Left cardiac atrium (tissue), 4 donors: ENCODE measurements at regions of chr2 and their contacts with region 1.

Region 1: DNA sequence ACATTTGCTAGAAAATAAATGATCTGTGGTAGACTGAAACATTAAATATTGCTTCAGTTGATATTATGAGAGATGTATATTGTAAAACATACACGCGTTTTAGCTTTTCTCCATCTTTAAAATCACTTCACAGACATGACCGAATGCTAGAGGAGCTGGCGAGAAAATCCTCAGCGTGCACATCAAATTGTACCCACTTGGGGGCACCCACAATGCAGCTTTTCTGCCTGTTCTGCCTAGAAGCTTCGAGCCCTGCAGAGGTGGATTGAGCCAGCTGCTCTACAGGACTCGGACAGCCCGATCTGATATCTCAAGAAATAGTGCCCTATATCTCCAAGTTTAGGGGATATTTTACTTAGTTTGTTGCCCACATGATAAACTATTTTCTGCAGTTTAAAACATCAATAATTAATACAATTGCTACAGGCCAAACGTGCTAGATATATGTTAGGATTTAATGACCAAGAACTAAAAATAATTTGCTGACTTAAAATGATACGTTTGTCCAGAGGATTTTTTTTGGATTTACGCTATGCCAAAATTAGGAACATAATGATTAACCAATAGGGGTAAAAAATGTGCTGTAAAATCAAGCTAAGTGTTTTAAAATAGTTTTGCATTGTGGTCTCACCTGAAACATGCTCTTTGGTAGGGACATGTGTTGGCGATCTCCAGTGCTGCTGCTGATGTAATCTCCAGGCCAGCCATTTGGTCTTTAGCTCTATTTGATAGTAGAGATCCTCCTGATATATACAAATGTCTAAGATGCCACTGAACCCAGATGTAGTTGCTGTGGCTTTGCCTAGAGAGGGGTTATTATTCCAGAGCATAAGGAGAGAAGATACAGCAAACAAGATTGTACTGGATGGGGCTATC is 22.3 kb upstream of the ATP5MC3 start:
- DNase-seq: peak; percentile 43
- ATAC-seq: peak; percentile 69 to 76

Region 2: DNA sequence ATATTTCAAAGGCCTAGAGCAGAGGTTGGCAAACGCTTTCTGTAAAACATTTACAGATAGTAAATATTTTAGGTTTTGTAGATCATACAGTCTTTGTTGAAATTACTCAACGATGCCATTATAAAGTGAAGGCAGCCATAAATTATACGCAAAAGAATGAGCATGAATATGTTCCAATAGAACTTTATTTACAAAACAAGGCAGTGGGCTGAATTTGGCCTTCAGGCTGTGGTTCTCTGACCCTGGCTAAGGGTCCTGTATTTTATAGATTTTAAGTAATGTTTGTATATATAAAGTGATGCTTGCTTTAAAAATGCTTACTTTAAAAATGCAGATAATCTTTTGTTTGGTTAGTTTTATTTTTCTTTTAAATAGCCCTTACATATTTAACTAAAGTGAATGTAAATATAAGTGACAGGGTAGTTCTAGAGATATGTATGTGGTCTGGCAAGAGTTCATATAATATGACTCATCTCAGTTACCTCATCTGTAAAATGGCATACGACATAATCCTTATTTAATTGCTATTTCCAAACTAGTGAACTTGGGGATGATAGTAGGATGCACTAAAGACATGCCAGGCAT is 29.4 kb after region 1 on chr2:
- intact Hi-C with region 1: no loop called
- DNase-seq: no peak
- ATAC-seq: no peak

Region 3: DNA sequence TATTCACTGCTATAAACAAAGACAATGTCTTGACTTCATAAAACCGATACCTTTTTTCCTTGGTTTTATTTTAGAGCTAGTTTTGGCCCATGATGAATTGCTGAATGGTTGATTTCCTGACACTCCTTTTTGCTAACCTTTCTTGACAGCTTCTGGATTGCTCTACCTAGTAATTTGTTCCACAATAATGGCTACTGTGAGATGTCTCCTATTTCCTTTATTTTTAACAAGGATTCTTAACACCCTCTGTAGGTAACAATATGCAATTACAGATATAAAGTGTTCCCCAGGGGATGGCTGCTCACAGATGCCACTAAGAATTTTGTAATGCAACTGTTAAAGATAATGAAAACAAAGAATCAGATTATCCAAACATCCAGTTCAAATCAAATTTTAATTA is 78.4 kb after region 1 on chr2:
- intact Hi-C with region 1: loop called in 1 of 2 experiments (anchors 5 kb)
- DNase-seq: no peak
- ATAC-seq: peak; percentile 67